ENCODE measurements at regions of chr10 and their contacts with region 1.

Region 1: DNA sequence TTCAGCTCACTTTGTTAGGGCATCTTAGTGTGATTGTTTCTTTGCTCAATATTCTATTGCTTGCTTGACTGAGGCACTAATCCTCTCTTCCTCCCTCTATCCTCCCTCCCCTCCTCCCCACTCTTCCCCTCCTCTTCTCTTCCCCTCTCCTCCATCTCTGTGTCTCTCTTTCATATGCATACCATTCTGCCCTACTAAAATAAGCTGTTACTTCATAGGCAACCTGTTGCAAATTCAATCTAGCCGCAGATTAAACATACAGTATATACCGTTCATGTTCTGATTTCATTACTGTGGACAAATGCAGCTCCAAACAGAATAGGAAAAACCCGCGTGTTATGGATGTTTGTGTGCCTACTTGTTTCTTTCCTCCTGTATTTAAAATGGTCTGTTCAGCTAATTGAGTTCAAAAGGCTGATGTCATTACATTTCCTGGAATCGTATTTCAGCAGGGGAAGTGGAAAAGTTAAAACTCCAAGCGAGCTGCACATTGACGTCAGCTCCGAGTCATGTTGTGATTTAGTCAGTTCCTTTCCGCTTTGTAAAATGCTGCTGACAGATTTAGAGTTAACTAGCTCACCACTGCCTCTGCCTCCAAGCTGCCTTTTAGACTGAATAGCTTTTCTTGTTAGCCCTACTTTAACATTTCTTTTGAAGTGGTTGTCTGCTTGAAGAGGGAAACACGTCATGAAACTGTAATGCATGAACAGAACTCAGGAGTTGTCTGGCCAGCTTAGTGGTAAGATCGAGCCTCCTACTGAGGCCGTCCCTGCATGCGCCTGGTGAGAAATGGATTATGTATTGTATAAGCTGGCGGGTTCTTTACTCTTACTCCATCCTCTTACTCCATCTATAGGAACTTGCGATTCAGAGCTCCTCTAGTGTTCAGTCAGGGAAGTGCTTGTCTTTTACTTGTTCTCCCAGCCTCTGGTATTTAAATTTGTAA is 69.0 kb downstream of the CREM start:
- DNase-seq: peak; percentile 70 to 95
- ATAC-seq: peak; percentile 96 to 98
- H3K4me3 ChIP-seq: peak overlapping the region; percentile 50
- H3K27ac ChIP-seq: peak overlapping the region; percentile 82 to 87
- H3K4me1 ChIP-seq: peaks cover 10% of the 10 kb centered on the region
- CTCF ChIP-seq: peak; percentile 75
- EP300 ChIP-seq: peak in 1 of 2 experiments; percentile 61; a peak in 1 of 5 replicates
- POLR2A ChIP-seq: no peak
- RAD21 ChIP-seq: peak; percentile 55 to 58; a peak in 4 of 5 replicates

Region 2: GRCh38 chr10:34994565-34995142 is 201.0 kb before region 1 on chr10:
- CTCF ChIA-PET with region 1: interaction called, 12 read pairs
- POLR2A ChIA-PET with region 1: no interaction called
- DNase-seq: peak; percentile 72 to 77
- ATAC-seq: peak; percentile 86 to 89
- H3K4me3 ChIP-seq: no peak overlapping the region
- H3K27ac ChIP-seq: peak overlapping the region in 1 of 2 experiments; percentile 55; a peak in 3 of 6 replicates
- H3K4me1 ChIP-seq: peaks cover 21% of the 10 kb centered on the region
- CTCF ChIP-seq: peak; percentile 84
- EP300 ChIP-seq: no peak
- POLR2A ChIP-seq: no peak
- RAD21 ChIP-seq: peak; percentile 81 to 84

Region 3: GRCh38 chr10:35126530-35127296 is 68.9 kb before region 1 on chr10 and contains the start of gene CREM:
- CTCF ChIA-PET with region 1: interaction called, 34 read pairs
- POLR2A ChIA-PET with region 1: interaction called, 64 read pairs
- DNase-seq: peak; percentile 85 to 98
- ATAC-seq: peak; percentile 92 to 94
- H3K4me3 ChIP-seq: peak within 1 kb of the TSS; percentile 87
- H3K27ac ChIP-seq: peak within 1 kb of the TSS; percentile 96 to 97
- H3K4me1 ChIP-seq: peaks cover 28% of the 10 kb centered on the region; the same call in 2 of the 3 replicates
- CTCF ChIP-seq: peak; percentile 77
- EP300 ChIP-seq: peak in 1 of 2 experiments; percentile 61; a peak in 1 of 5 replicates
- POLR2A ChIP-seq: peak; percentile 97
- RAD21 ChIP-seq: peak; percentile 58 to 81
- polyA plus RNA-seq, gene CREM: 94.5 and 112 TPM in 2 replicates

Region 4: GRCh38 chr10:35178331-35178730 is 17.3 kb before region 1 on chr10:
- CTCF ChIA-PET with region 1: interaction called, 21 read pairs
- POLR2A ChIA-PET with region 1: no interaction called
- DNase-seq: no peak
- ATAC-seq: no peak
- H3K4me3 ChIP-seq: no peak overlapping the region
- H3K27ac ChIP-seq: no peak overlapping the region
- H3K4me1 ChIP-seq: no peaks in the 10 kb centered on the region
- CTCF ChIP-seq: no peak
- EP300 ChIP-seq: no peak
- POLR2A ChIP-seq: no peak
- RAD21 ChIP-seq: no peak

Region 5: GRCh38 chr10:35208536-35208935 is 12.9 kb after region 1 on chr10:
- CTCF ChIA-PET with region 1: interaction called, 30 read pairs
- POLR2A ChIA-PET with region 1: interaction called, 3 read pairs
- DNase-seq: no peak
- ATAC-seq: no peak
- H3K4me3 ChIP-seq: no peak overlapping the region
- H3K27ac ChIP-seq: no peak overlapping the region
- H3K4me1 ChIP-seq: 0 out of 3 replicates have a peak, but pooled peaks cover 3% of the 10 kb centered on the region
- CTCF ChIP-seq: no peak
- EP300 ChIP-seq: no peak
- POLR2A ChIP-seq: no peak
- RAD21 ChIP-seq: no peak

Region 6: GRCh38 chr10:35324196-35324595 is 128.6 kb after region 1 on chr10:
- CTCF ChIA-PET with region 1: no interaction called
- POLR2A ChIA-PET with region 1: no interaction called
- DNase-seq: no peak
- ATAC-seq: no peak
- H3K4me3 ChIP-seq: no peak overlapping the region
- H3K27ac ChIP-seq: no peak overlapping the region
- H3K4me1 ChIP-seq: peaks cover 7% of the 10 kb centered on the region; the same call in 1 of the 3 replicates
- CTCF ChIP-seq: no peak
- EP300 ChIP-seq: no peak
- POLR2A ChIP-seq: no peak
- RAD21 ChIP-seq: no peak